Transverse colon (tissue), 4 donors: ENCODE measurements at regions of chrX and their contacts with region 1.

Region 1: GRCh38 chrX:136130931-136131833 is 16.2 kb upstream of the FHL1 start:
- DNase-seq: no peak
- H3K4me3 ChIP-seq: no peak overlapping the region
- H3K27ac ChIP-seq: peak overlapping the region in 2 of 4 donors; percentile 34 to 44
- H3K4me1 ChIP-seq: no peaks in the 10 kb centered on the region
- H3K27me3 ChIP-seq: no peaks in the 10 kb centered on the region
- CTCF ChIP-seq: no peak
- EP300 ChIP-seq: no peak
- POLR2A ChIP-seq: no peak

Region 2: GRCh38 chrX:134642386-134642785 is 1488.8 kb before region 1 on chrX:
- in situ Hi-C with region 1: no loop called
- intact Hi-C with region 1: loop called (anchors 10 kb)
- DNase-seq: no peak
- H3K4me3 ChIP-seq: no peak overlapping the region
- H3K27ac ChIP-seq: no peak overlapping the region
- H3K4me1 ChIP-seq: no peaks in the 10 kb centered on the region
- H3K27me3 ChIP-seq: no peaks in the 10 kb centered on the region
- CTCF ChIP-seq: no peak
- EP300 ChIP-seq: no peak
- POLR2A ChIP-seq: no peak

Region 3: DNA sequence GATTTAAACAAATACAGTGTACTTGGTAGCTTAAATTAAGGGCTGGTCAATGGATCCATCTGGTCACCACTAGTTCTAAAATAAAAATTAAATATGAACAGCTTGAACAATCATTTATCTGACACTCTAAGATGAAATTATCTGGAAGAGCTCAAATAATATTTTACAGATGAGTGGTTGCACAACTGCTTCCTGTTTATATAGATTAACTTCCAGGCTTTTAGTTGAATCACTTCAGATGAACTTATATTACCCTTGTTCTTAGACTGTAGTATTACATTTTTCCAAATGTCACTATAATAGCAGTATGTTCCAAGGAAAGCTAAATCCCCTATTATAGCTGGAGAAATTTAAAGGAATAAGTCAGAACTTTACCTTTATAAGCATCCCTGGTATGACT is 1232.7 kb before region 1 on chrX:
- in situ Hi-C with region 1: no loop called
- intact Hi-C with region 1: loop called (anchors 5 kb)
- DNase-seq: no peak
- H3K4me3 ChIP-seq: no peak overlapping the region
- H3K27ac ChIP-seq: no peak overlapping the region
- H3K4me1 ChIP-seq: no peaks in the 10 kb centered on the region
- H3K27me3 ChIP-seq: no peaks in the 10 kb centered on the region
- CTCF ChIP-seq: no peak
- EP300 ChIP-seq: no peak
- POLR2A ChIP-seq: no peak

Region 4: DNA sequence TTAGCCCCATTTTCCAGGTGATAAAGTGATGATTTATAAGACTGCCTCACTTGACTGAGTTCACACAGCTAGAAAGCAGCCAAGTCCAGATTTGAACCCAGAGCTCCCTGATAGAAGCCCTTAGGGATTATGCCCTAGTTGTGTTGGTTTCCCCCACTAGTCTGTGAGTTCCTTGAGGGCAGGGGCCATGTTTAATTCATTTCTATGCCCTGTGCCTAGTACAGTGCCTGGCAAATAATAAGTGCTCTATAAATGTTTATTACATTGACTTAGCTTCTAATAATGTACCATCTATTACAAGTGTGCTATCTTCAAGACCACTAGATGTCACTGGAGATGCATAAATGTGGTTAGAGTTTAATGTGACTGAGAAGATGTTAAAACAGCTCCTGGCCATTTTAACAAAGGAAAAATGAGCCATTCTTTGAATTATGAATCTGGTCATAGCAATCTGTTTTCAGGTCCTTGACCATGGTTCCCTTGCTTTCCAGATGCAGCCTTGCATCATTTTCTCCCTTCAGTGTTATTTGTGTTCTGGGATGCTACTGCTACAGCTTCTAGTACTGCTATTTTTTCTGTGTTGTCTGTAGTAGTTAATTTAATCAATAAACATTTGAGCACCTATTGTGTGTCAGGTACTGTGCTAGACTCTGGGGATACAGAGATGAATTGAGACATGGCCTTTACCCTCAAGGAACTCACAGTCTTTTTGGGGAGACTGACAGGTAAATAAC is 102.8 kb before region 1 on chrX:
- in situ Hi-C with region 1: no loop called
- intact Hi-C with region 1: no loop called
- DNase-seq: no peak
- H3K4me3 ChIP-seq: no peak overlapping the region
- H3K27ac ChIP-seq: peak overlapping the region; percentile 73 to 84 (median 78)
- H3K4me1 ChIP-seq: peaks cover 0 to 8% (median 3%) of the 10 kb centered on the region in 4 donors
- H3K27me3 ChIP-seq: no peaks in the 10 kb centered on the region
- CTCF ChIP-seq: peak; percentile 40 to 63 (median 53)
- EP300 ChIP-seq: no peak
- POLR2A ChIP-seq: no peak

Region 5: DNA sequence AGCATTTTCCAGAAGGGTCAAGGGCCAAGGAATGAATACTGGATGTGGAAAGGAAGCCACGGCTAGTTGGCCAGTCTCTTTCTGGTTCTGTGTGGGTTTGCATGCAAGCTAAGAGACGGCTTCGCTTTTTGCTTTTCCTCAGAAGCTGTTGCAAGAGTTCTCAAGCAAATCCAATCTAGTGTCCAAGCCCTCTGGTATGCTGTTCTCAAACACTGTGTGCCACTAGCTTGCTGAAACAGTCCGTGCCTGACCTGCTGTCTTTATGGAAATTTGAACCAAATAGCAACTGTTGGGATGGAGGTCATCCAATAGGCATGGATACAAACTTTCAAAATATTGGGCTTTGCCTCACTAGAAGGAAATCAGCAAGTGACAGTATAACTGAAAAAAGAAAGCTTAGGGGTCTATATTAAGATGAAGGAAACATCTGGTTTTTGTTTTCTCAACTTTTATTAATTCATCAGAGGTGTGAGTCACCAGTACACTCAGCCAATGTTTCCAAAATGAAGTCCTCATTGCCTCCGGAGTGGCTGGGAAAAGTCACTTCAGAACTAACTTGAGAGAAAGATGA is 75.4 kb before region 1 on chrX:
- in situ Hi-C with region 1: no loop called
- intact Hi-C with region 1: loop called (anchors 2 kb)
- DNase-seq: no peak
- H3K4me3 ChIP-seq: no peak overlapping the region
- H3K27ac ChIP-seq: peak overlapping the region; percentile 67 to 84 (median 81)
- H3K4me1 ChIP-seq: peaks cover 0 to 6% (median 0%) of the 10 kb centered on the region in 4 donors
- H3K27me3 ChIP-seq: no peaks in the 10 kb centered on the region
- CTCF ChIP-seq: no peak
- EP300 ChIP-seq: peak; percentile 81
- POLR2A ChIP-seq: peak; percentile 37